ENCODE measurements at regions of chr20 and their contacts with region 1.

Region 1: DNA sequence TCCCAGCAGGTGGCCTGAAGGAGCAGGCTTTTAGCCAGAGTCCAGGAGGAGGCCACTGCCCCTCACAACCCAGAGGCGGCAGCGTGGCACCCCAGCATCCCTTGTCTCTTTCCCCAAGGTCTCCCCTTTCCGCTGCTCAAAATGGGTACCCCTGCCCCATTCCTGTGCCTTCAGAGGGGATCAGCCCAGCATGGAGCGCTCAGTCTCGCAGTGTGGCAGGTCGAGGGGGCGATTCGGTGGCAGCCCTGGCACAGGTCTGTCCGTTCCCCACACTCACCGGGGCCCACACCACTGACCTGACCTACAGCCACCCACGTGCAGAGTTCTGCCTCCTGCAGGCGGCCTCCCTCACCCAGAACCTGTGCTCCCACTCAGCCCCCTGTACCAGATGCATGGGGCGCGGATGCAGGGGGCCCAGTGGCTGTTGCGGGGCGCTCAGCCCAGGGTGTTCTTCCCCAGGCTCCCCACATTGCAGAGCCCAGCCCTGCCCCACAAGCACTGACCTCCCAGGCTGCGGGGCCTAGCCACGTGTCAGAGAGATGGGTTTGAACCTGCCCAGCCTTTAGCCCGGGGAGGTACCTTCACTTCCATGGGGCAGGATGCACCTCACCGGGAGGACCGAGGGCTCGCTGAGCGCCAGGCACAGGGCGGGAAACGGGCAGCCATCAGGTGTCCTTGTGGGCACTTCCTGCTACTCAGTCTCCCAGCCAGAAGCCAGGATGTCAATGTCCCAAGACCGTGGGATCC is 41.8 kb downstream of the DSTN start:
- DNase-seq: peak in 2 of 9 experiments; percentile 29 to 39
- ATAC-seq: no peak
- H3K4me3 ChIP-seq: no peak overlapping the region
- H3K4me3 Mint-ChIP-seq: peak overlapping the region; percentile 69
- H3K27ac ChIP-seq: peak overlapping the region; percentile 43 to 87
- H3K27ac Mint-ChIP-seq: peak overlapping the region; percentile 99
- H3K4me1 ChIP-seq: peaks cover 41% of the 10 kb centered on the region
- H3K4me1 Mint-ChIP-seq: peaks cover 44% of the 10 kb centered on the region
- H3K27me3 ChIP-seq: no peaks in the 10 kb centered on the region
- H3K27me3 Mint-ChIP-seq: no peaks in the 10 kb centered on the region
- CTCF ChIP-seq: peak; percentile 42

Region 2: GRCh38 chr20:17569616-17570346 is 41.9 kb before region 1 on chr20 and contains the start of gene DSTN:
- CTCF ChIA-PET with region 1: interaction called, 12 read pairs
- POLR2A ChIA-PET with region 1: interaction called, 33 read pairs
- intact Hi-C with region 1: loop called (anchors 1 to 2 kb)
- DNase-seq: peak; percentile 76 to 94 (median 86)
- ATAC-seq: peak; percentile 88
- H3K4me3 ChIP-seq: peak within 1 kb of the TSS; percentile 80 to 92
- H3K4me3 Mint-ChIP-seq: peak within 1 kb of the TSS; percentile 85
- H3K27ac ChIP-seq: peak within 1 kb of the TSS; percentile 73 to 81
- H3K27ac Mint-ChIP-seq: peak within 1 kb of the TSS; percentile 91
- H3K4me1 ChIP-seq: peaks cover 24% of the 10 kb centered on the region
- H3K4me1 Mint-ChIP-seq: peaks cover 28% of the 10 kb centered on the region
- H3K27me3 ChIP-seq: no peaks in the 10 kb centered on the region
- H3K27me3 Mint-ChIP-seq: no peaks in the 10 kb centered on the region
- CTCF ChIP-seq: no peak
- total RNA-seq, gene DSTN: 40.5 to 42.9 TPM

Region 3: GRCh38 chr20:17691758-17692157 is 80.0 kb after region 1 on chr20:
- CTCF ChIA-PET with region 1: no interaction called
- POLR2A ChIA-PET with region 1: no interaction called
- intact Hi-C with region 1: no loop called
- DNase-seq: no peak
- ATAC-seq: no peak
- H3K4me3 ChIP-seq: no peak overlapping the region
- H3K4me3 Mint-ChIP-seq: no peak overlapping the region
- H3K27ac ChIP-seq: no peak overlapping the region
- H3K27ac Mint-ChIP-seq: no peak overlapping the region
- H3K4me1 ChIP-seq: no peaks in the 10 kb centered on the region
- H3K4me1 Mint-ChIP-seq: no peaks in the 10 kb centered on the region
- H3K27me3 ChIP-seq: peaks cover 0 to 4% of the 10 kb centered on the region in 2 experiments
- H3K27me3 Mint-ChIP-seq: peaks cover 40% of the 10 kb centered on the region
- CTCF ChIP-seq: no peak

Measured in CD8-positive, alpha-beta T cell (primary cell).